ENCODE measurements at regions of chr5 and their contacts with region 1.

Region 1: DNA sequence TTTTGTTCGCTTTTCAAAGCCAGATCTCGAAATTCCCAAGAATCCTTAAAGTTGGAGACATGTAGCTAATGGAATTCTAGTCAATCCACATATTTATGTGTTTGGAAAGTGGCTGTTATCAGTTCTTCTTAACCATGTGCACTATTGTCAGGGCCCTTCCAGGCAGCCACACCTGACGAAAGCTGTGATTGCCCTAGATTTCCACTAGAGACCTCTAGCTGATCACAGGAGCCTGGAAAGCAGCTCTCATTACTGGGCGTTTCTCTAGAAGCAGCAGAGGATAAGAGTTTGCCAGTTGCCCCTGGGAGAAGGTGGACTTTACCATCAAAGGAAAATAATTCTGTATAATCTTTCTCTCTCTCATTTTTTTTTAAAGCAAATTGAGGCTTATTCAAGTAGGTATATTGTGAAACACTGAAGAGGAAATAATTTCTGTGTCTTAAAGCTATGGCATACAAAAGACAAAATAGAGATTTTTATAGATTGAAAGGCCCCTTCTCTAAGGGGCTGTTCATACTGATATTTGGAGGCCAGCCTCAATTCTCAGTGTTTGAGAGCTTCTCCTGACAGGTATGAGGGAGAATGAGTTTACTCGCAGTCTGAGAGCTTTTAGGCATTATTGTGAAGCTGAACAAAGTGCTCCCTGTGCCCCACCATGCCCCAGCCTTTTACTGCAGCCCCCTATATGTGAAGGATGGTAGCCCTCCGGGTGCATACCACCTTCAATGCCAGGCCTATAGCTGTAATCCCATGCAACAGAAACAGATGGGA is 405.4 kb upstream of the ACTBL2 start:
- DNase-seq: peak; percentile 58 to 64
- H3K4me3 ChIP-seq: no peak overlapping the region
- H3K27ac ChIP-seq: peak overlapping the region; percentile 48
- H3K4me1 ChIP-seq: peaks cover 18% of the 10 kb centered on the region
- H3K27me3 ChIP-seq: no peaks in the 10 kb centered on the region
- CTCF ChIP-seq: peak; percentile 58

Region 2: GRCh38 chr5:56941981-56942380 is 946.1 kb before region 1 on chr5:
- CTCF ChIA-PET with region 1: no interaction called
- POLR2A ChIA-PET with region 1: no interaction called
- intact Hi-C with region 1: no loop called
- DNase-seq: no peak
- H3K4me3 ChIP-seq: no peak overlapping the region
- H3K27ac ChIP-seq: no peak overlapping the region
- H3K4me1 ChIP-seq: no peaks in the 10 kb centered on the region
- H3K27me3 ChIP-seq: no peaks in the 10 kb centered on the region
- CTCF ChIP-seq: no peak

Region 3: GRCh38 chr5:57435701-57436134 is 452.3 kb before region 1 on chr5:
- CTCF ChIA-PET with region 1: no interaction called
- POLR2A ChIA-PET with region 1: interaction called, 3 read pairs
- intact Hi-C with region 1: loop called (anchors 5 kb)
- DNase-seq: peak; percentile 58 to 99
- H3K4me3 ChIP-seq: no peak overlapping the region
- H3K27ac ChIP-seq: peak overlapping the region; percentile 99
- H3K4me1 ChIP-seq: peaks cover 42% of the 10 kb centered on the region
- H3K27me3 ChIP-seq: no peaks in the 10 kb centered on the region
- CTCF ChIP-seq: no peak

Region 4: DNA sequence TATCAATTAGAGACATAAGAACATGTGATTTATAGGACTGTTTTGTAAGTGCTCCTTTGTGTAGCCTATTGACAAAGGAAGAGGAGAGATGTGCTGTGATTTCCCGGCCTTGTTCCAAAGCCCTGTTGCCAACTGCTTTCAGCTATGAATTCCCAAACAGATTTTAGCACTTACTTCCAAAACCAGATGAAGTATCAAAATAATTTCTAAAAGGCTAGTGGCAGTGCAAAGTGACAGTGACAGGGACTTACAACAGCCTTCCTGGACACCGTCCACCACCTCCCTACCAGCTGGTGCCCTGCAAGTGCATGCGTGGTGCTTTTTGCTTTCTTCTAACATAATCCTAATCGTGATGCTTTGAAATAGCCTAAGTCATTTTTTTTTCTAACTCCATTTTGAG is 151.3 kb before region 1 on chr5:
- CTCF ChIA-PET with region 1: interaction called, 5 read pairs
- POLR2A ChIA-PET with region 1: interaction called, 10 read pairs
- intact Hi-C with region 1: loop called (anchors 1 kb)
- DNase-seq: no peak
- H3K4me3 ChIP-seq: no peak overlapping the region
- H3K27ac ChIP-seq: peak overlapping the region; percentile 92
- H3K4me1 ChIP-seq: peaks cover 49% of the 10 kb centered on the region
- H3K27me3 ChIP-seq: no peaks in the 10 kb centered on the region
- CTCF ChIP-seq: no peak

Region 5: GRCh38 chr5:57834829-57835608 is 53.0 kb before region 1 on chr5:
- CTCF ChIA-PET with region 1: no interaction called
- POLR2A ChIA-PET with region 1: interaction called, 3 read pairs
- intact Hi-C with region 1: loop called (anchors 1 kb)
- DNase-seq: no peak
- H3K4me3 ChIP-seq: no peak overlapping the region
- H3K27ac ChIP-seq: no peak overlapping the region
- H3K4me1 ChIP-seq: peaks cover 30% of the 10 kb centered on the region
- H3K27me3 ChIP-seq: no peaks in the 10 kb centered on the region
- CTCF ChIP-seq: no peak

Region 6: DNA sequence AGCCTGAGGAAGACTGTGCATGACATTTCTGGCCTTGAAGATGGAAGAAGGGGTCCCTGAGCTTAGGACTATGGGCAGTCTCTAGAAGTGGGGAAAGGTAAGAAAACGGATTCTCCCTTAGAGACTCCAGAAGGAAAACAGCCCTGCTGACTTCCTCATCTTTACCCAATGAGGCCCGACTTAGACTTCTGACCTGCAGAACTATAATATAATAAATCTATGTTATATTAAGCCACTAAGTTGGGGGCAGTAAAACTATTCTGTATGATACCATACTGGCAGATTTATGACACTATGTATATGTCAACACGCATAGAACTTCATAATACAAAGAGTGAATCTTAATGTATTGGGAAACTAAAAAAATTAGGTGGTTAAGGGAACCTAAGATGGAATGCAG is 149.9 kb after region 1 on chr5:
- CTCF ChIA-PET with region 1: no interaction called
- POLR2A ChIA-PET with region 1: no interaction called
- intact Hi-C with region 1: no loop called
- DNase-seq: no peak
- H3K4me3 ChIP-seq: no peak overlapping the region
- H3K27ac ChIP-seq: no peak overlapping the region
- H3K4me1 ChIP-seq: peaks cover 3% of the 10 kb centered on the region
- H3K27me3 ChIP-seq: no peaks in the 10 kb centered on the region
- CTCF ChIP-seq: no peak

Region 7: DNA sequence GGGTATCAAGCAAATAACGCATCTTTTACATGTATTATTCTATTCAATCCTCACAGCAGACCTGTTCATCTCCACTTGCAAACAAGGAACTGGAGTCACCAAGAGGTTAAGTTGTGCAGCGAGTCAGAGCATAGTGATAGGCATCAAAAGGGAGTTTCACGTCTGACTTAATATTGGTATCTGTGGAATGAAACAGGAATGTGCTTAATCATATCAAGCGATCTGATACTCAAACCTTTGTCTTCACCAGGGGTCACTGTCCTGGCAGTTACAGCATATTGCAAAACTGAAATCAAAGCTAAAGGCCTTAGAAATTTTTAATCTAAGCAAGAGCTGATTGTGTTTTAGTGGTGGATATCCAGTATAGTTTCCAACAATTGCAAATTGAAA is 300.2 kb after region 1 on chr5:
- CTCF ChIA-PET with region 1: interaction called, 5 read pairs
- POLR2A ChIA-PET with region 1: interaction called, 5 read pairs
- intact Hi-C with region 1: loop called (anchors 1 kb)
- DNase-seq: peak; percentile 60 to 99
- H3K4me3 ChIP-seq: peak overlapping the region; percentile 1; the same call in 1 of the 2 replicates
- H3K27ac ChIP-seq: peak overlapping the region; percentile 94
- H3K4me1 ChIP-seq: peaks cover 80% of the 10 kb centered on the region
- H3K27me3 ChIP-seq: no peaks in the 10 kb centered on the region
- CTCF ChIP-seq: no peak

Region 8: DNA sequence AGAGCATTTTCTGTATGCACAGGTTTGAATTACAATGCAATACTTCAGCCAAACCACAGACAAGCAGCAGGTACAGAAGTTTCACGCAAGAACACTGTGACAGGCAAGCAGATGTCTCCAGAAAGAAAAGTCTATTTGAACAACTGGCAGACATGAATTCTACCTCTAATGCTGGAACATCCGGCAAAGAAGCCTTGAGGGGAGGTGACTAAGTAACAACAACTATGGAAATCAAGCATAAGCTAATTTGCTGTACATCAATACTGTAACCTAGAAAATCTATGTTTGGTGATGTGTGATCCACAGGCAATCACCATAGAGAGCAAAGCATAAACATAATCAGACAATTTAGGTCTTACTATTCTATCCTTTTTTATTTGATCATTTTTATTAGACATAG is 506.3 kb after region 1 on chr5:
- CTCF ChIA-PET with region 1: no interaction called
- POLR2A ChIA-PET with region 1: no interaction called
- intact Hi-C with region 1: no loop called
- DNase-seq: no peak
- H3K4me3 ChIP-seq: no peak overlapping the region
- H3K27ac ChIP-seq: no peak overlapping the region
- H3K4me1 ChIP-seq: no peaks in the 10 kb centered on the region
- H3K27me3 ChIP-seq: no peaks in the 10 kb centered on the region
- CTCF ChIP-seq: no peak

Region 9: GRCh38 chr5:58849921-58850667 is 962.1 kb after region 1 on chr5:
- CTCF ChIA-PET with region 1: no interaction called
- POLR2A ChIA-PET with region 1: no interaction called
- intact Hi-C with region 1: loop called (anchors 5 kb)
- DNase-seq: peak; percentile 39 to 82
- H3K4me3 ChIP-seq: no peak overlapping the region
- H3K27ac ChIP-seq: no peak overlapping the region
- H3K4me1 ChIP-seq: peaks cover 12% of the 10 kb centered on the region
- H3K27me3 ChIP-seq: no peaks in the 10 kb centered on the region
- CTCF ChIP-seq: peak; percentile 75